ENCODE measurements at regions of chr12 and their contacts with region 1.

Region 1: DNA sequence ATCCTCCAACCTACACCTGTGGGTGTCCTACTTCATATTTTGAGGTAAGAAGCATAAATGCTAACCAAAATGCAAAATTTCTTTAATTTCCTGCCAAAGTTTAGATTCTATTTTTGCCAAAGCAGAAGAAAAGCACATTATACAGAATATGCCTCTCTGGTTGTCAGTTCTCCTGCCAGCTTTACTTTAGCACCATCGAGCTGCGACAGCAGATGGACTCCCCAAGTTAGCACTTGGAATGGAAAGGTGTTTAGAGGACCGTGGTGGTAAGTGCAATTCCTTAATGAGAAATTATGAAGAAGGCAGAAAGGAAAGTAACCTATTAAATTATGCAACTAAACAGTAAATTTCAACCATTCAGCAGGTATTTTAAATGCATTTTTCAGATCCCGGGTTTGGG is 326.6 kb downstream of the RERGL start:
- DNase-seq: no peak
- H3K4me3 ChIP-seq: no peak overlapping the region
- H3K27ac ChIP-seq: no peak overlapping the region
- H3K4me1 ChIP-seq: no peaks in the 10 kb centered on the region
- H3K27me3 ChIP-seq: no peaks in the 10 kb centered on the region

Region 2: DNA sequence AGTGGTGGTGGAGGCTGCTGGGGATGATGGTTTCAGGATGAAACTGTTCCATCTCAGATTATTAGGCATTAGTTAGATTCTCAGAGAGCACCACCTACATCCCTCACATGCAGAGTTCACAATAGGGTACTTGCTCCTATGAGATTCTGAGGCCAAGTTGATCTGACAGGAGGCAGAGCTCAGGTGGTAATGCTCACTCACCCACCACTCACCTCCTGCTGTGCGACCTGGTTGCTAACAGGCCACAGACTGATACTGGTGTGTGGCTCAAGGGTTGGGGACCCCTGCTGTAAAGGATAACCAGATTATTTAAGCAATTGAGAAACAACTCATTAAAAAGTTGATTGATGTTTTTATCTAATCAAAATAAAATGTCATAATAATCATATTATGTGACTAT is 78.1 kb after region 1 on chr12:
- in situ Hi-C with region 1: loop called (anchors 10 kb)
- DNase-seq: no peak
- H3K4me3 ChIP-seq: no peak overlapping the region
- H3K27ac ChIP-seq: no peak overlapping the region
- H3K4me1 ChIP-seq: no peaks in the 10 kb centered on the region
- H3K27me3 ChIP-seq: no peaks in the 10 kb centered on the region

Region 3: DNA sequence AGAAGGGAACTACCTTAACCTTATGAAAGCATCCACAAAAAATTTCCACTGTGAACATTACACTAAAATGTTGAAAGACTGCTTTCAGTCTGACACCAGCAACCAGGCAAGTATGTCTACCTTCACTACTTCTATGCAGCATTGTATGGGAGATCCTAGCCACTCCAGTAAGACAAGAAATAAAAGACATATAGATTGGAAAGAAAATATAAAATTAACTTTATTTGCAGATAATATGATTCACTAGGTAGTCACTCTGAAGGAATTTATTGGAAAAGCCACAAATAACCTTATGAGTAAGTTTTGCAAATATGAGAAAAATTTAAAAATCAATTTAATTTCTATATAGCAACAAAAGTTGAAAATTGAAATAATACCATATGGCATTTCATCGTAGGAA is 154.6 kb after region 1 on chr12:
- in situ Hi-C with region 1: no loop called
- DNase-seq: peak; percentile 22
- H3K4me3 ChIP-seq: no peak overlapping the region
- H3K27ac ChIP-seq: no peak overlapping the region
- H3K4me1 ChIP-seq: peaks cover 9% of the 10 kb centered on the region
- H3K27me3 ChIP-seq: no peaks in the 10 kb centered on the region